Activated CD4-positive, alpha-beta memory T cell treated with anti-CD3 and anti-CD28 coated beads for 36 hours (primary cell): ENCODE measurements at regions of chr9 and their contacts with region 1.

Region 1: GRCh38 chr9:18442629-18443491 is 31.1 kb upstream of the ADAMTSL1 start:
- DNase-seq: peak; percentile 65
- H3K4me3 Mint-ChIP-seq: no peak overlapping the region
- H3K27ac Mint-ChIP-seq: no peak overlapping the region
- H3K4me1 Mint-ChIP-seq: peaks cover 3% of the 10 kb centered on the region
- H3K27me3 Mint-ChIP-seq: peaks cover 11% of the 10 kb centered on the region

Region 2: GRCh38 chr9:18457510-18457909 is 14.7 kb after region 1 on chr9:
- CTCF ChIA-PET with region 1: interaction called, 19 read pairs
- POLR2A ChIA-PET with region 1: no interaction called
- intact Hi-C with region 1: no loop called
- DNase-seq: no peak
- H3K4me3 Mint-ChIP-seq: no peak overlapping the region
- H3K27ac Mint-ChIP-seq: no peak overlapping the region
- H3K4me1 Mint-ChIP-seq: no peaks in the 10 kb centered on the region
- H3K27me3 Mint-ChIP-seq: peaks cover 2% of the 10 kb centered on the region

Region 3: DNA sequence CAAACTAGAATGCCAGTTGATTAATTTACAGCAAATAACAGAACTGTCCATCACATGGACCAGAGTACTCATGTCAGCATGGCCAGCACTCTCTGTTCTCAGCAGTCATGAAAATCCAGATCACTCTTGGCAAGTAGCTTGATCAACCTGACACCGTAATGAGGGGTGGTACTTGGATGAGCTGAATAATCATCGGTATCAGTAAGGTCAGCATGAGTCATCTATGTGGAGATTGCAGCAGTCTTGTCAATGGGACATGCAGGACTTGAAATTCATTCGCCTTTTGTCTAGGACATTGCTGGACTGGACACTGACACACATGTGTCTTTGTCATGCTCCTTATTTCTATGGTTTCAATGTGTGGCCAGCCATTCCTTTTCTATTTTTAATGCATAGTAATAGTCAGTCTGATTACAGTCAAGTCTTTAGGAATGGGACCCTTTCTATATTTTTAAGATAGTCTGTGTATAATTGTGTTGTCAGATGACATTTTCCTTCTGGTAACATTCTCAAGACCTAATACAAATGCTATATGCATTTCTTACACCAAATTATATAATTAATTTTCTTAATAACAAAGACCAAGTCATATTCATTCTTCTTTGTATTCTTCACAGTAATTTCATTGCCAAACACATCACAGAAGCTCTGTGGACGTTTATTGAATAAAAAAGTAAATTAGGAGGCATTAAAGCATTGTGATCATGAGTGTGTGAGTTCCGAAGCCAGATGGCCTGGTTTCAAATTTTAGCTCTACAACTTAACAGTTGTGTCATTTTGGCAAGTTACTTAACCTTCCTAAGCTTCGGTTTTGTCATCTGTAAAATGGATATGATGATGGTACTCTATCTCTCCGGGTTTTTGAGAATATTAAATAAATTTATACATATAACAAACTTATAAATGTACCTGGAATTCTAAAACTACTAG is 88.5 kb after region 1 on chr9:
- CTCF ChIA-PET with region 1: no interaction called
- POLR2A ChIA-PET with region 1: no interaction called
- intact Hi-C with region 1: no loop called
- DNase-seq: no peak
- H3K4me3 Mint-ChIP-seq: no peak overlapping the region
- H3K27ac Mint-ChIP-seq: no peak overlapping the region
- H3K4me1 Mint-ChIP-seq: no peaks in the 10 kb centered on the region
- H3K27me3 Mint-ChIP-seq: no peaks in the 10 kb centered on the region

Region 4: GRCh38 chr9:18580151-18580550 is 137.3 kb after region 1 on chr9:
- CTCF ChIA-PET with region 1: no interaction called
- POLR2A ChIA-PET with region 1: no interaction called
- intact Hi-C with region 1: no loop called
- DNase-seq: no peak
- H3K4me3 Mint-ChIP-seq: no peak overlapping the region
- H3K27ac Mint-ChIP-seq: no peak overlapping the region
- H3K4me1 Mint-ChIP-seq: no peaks in the 10 kb centered on the region
- H3K27me3 Mint-ChIP-seq: no peaks in the 10 kb centered on the region

Region 5: GRCh38 chr9:19028835-19029451 is 586.1 kb after region 1 on chr9:
- CTCF ChIA-PET with region 1: no interaction called
- POLR2A ChIA-PET with region 1: no interaction called
- intact Hi-C with region 1: loop called (anchors 2 kb)
- DNase-seq: peak; percentile 25
- H3K4me3 Mint-ChIP-seq: no peak overlapping the region
- H3K27ac Mint-ChIP-seq: no peak overlapping the region
- H3K4me1 Mint-ChIP-seq: peaks cover 8% of the 10 kb centered on the region
- H3K27me3 Mint-ChIP-seq: peaks cover 14% of the 10 kb centered on the region